MCF 10A (cell line): ENCODE measurements at regions of chr1 and their contacts with region 1.

Region 1: DNA sequence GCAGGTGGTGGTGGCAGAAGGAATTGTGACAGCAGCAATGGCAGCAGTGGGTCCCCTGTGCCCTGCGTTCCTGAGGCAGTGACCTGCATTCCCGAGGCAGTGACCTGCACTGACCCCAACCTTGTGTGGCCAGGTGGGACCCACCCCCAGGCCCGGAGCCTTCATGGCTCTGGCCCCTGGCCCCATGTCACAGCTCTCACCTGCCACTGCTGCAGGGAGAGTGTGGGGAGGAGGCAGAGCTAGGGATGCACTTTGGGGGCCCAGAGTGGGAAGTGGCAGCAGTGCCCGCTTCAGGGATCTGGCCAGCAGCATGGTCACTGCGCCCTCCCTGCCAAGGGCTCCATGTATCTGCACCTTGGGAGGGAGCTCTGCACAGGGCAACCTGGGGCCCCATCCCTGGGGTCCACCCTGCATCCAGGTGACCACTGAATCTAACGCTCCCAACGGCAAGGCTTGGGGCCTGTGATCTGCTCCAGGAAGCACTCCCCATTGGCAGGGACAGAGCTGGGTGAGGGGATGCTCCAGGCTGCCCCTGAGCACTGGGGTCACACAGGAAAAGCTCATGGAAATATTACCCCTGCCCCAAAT is 618.6 kb downstream of the RWDD3 start:
- DNase-seq: no peak
- H3K4me3 Mint-ChIP-seq: no peak overlapping the region
- H3K27ac Mint-ChIP-seq: no peak overlapping the region
- H3K4me1 Mint-ChIP-seq: no peaks in the 10 kb centered on the region
- H3K27me3 Mint-ChIP-seq: no peaks in the 10 kb centered on the region
- CTCF ChIP-seq: no peak

Region 2: GRCh38 chr1:95604771-95605170 is 247.8 kb before region 1 on chr1:
- CTCF ChIA-PET with region 1: no interaction called
- POLR2A ChIA-PET with region 1: no interaction called
- intact Hi-C with region 1: loop called (anchors 10 kb)
- DNase-seq: no peak
- H3K4me3 Mint-ChIP-seq: no peak overlapping the region
- H3K27ac Mint-ChIP-seq: no peak overlapping the region
- H3K4me1 Mint-ChIP-seq: no peaks in the 10 kb centered on the region
- H3K27me3 Mint-ChIP-seq: no peaks in the 10 kb centered on the region
- CTCF ChIP-seq: no peak

Region 3: GRCh38 chr1:95790136-95790535 is 62.4 kb before region 1 on chr1:
- CTCF ChIA-PET with region 1: no interaction called
- POLR2A ChIA-PET with region 1: no interaction called
- intact Hi-C with region 1: no loop called
- DNase-seq: no peak
- H3K4me3 Mint-ChIP-seq: no peak overlapping the region
- H3K27ac Mint-ChIP-seq: no peak overlapping the region
- H3K4me1 Mint-ChIP-seq: no peaks in the 10 kb centered on the region
- H3K27me3 Mint-ChIP-seq: no peaks in the 10 kb centered on the region
- CTCF ChIP-seq: no peak

Region 4: DNA sequence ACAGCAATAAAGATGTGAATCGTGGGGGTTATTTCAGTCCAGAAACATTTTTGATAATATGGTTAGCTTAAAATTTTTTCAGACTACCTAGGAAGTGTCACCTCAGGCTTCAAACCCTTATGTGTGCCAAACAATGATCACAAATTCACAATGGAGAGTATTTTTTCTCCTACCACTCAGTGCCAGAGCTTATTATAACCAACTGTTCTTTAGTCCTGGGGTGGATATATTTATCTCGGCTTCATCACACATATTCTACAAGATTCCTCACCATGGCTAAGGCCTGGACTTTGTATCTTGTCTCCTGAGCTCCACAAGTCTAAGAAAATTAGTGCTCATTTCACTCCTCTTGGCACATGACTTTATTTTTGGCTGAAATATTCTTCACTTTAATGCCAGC is 10.5 kb after region 1 on chr1:
- CTCF ChIA-PET with region 1: no interaction called
- POLR2A ChIA-PET with region 1: no interaction called
- intact Hi-C with region 1: no loop called
- DNase-seq: no peak
- H3K4me3 Mint-ChIP-seq: no peak overlapping the region
- H3K27ac Mint-ChIP-seq: no peak overlapping the region
- H3K4me1 Mint-ChIP-seq: no peaks in the 10 kb centered on the region
- H3K27me3 Mint-ChIP-seq: no peaks in the 10 kb centered on the region
- CTCF ChIP-seq: no peak

Region 5: DNA sequence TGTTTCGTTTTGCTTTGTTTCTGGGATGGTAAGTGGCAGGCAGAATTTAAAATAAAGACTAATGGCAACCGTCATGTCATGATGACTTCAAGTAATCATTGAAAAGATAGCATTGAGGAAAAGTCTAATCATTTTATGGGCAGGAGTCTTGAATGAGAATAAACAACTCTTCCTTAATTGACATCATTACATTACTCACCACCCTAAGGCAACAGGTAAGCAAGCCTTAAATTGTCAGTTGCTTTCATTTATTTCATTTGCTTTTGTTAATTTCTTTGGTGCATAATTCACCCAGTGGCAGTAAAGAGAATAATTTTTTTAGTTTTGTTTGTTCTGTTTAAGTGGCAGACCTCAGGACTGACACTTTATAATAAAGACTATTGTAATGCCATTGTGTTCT is 50.5 kb after region 1 on chr1:
- CTCF ChIA-PET with region 1: no interaction called
- POLR2A ChIA-PET with region 1: no interaction called
- intact Hi-C with region 1: no loop called
- DNase-seq: peak; percentile 11
- H3K4me3 Mint-ChIP-seq: no peak overlapping the region
- H3K27ac Mint-ChIP-seq: no peak overlapping the region
- H3K4me1 Mint-ChIP-seq: no peaks in the 10 kb centered on the region
- H3K27me3 Mint-ChIP-seq: no peaks in the 10 kb centered on the region
- CTCF ChIP-seq: no peak